Dendritic cell treated with granulocyte-macrophage colony-stimulating factor and Interleukin-4, amounts not matched to agents 40 ng/mL and 50 ng/mL, for 4 days (primary cell): ENCODE measurements at regions of chrX and their contacts with region 1.

Region 1: DNA sequence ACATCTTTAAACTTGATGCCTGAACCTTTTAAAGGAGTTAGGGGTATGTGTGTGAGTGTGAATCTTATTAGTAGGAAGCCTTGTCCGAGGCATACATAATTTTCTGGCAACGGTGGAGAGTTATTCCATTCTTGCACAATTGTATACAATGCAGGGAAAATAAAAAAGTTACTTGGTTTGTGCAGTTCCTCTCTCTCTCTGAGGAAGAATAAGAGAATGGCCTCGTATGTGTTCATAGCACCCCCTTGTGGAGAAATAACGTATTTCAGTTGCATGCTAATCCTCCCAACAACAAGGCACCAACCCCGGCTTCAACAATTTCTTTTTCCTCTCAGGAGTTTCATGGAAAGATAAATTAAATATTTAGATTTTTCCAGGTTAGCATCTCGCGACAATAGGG is 33.7 kb upstream of the FGF13 start:
- H3K4me3 Mint-ChIP-seq: no peak overlapping the region
- H3K27ac Mint-ChIP-seq: no peak overlapping the region
- H3K4me1 Mint-ChIP-seq: no peaks in the 10 kb centered on the region
- H3K27me3 Mint-ChIP-seq: no peaks in the 10 kb centered on the region

Region 2: GRCh38 chrX:138128027-138128671 is 617.0 kb before region 1 on chrX:
- intact Hi-C with region 1: loop called (anchors 2 kb)
- H3K4me3 Mint-ChIP-seq: no peak overlapping the region
- H3K27ac Mint-ChIP-seq: no peak overlapping the region
- H3K4me1 Mint-ChIP-seq: no peaks in the 10 kb centered on the region
- H3K27me3 Mint-ChIP-seq: no peaks in the 10 kb centered on the region

Region 3: DNA sequence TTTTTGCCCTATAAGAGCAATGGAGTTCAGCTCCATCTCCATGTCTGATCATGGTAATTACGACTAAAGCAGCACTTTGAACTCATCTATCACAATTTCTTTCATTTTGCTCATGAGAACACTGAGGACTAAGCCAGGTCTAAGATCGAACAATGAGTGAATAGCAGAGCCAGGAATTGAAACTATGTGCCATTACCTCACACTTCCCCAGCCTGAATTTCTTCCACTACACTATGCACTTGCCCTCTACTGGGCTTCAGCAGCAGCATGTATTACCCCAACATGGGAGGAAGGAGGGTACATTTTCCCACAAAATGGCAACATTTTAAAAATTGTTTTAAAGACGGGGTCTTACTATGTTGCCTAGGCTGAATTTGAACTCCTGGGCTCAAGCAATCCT is 241.0 kb after region 1 on chrX:
- intact Hi-C with region 1: no loop called
- H3K4me3 Mint-ChIP-seq: no peak overlapping the region
- H3K27ac Mint-ChIP-seq: no peak overlapping the region
- H3K4me1 Mint-ChIP-seq: peaks cover 22% of the 10 kb centered on the region
- H3K27me3 Mint-ChIP-seq: no peaks in the 10 kb centered on the region